Activated T-helper 1 cell treated with anti-CD3 and anti-CD28 coated beads, Interleukin-12 subunit alpha, Interleukin-12 subunit beta, Interleukin-2, Interleukin-4 antibody, amounts not matched to agents 30 ng/mL and 10 ng/mL and 1 ng/mL, durations not matched to agents 14 hours and 24 hours and 36 hours (primary cell): ENCODE measurements at regions of chr19 and their contacts with region 1.

Region 1: GRCh38 chr19:16338470-16339360 is 14.1 kb downstream of the KLF2 start:
- DNase-seq: peak; percentile 69
- H3K4me3 Mint-ChIP-seq: peak overlapping the region; percentile 76
- H3K27ac Mint-ChIP-seq: peak overlapping the region; percentile 95
- H3K4me1 Mint-ChIP-seq: peaks cover 65% of the 10 kb centered on the region
- H3K27me3 Mint-ChIP-seq: peaks cover 15% of the 10 kb centered on the region

Region 2: GRCh38 chr19:15730538-15730937 is 608.2 kb before region 1 on chr19:
- intact Hi-C with region 1: no loop called
- DNase-seq: no peak
- H3K4me3 Mint-ChIP-seq: no peak overlapping the region
- H3K27ac Mint-ChIP-seq: no peak overlapping the region
- H3K4me1 Mint-ChIP-seq: no peaks in the 10 kb centered on the region
- H3K27me3 Mint-ChIP-seq: no peaks in the 10 kb centered on the region

Region 3: DNA sequence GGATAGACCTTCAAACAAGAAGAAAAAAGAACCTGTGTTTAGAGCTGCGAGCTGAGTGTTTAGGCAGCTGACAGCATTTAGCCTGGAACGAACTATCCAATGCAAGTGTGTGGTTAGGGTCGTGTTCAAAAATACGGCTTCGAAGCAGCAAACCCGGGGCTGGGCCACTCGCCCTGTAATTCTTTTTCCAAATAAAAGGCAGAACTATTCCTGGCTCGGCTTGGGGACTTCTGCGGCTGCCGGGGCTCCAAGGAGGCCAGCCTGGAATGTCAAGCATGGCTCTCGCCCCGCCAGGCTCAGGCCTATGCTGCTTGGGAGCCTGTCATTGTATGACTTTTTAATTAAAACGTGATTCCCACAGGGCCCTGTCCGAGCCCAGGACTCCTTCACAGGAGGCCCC is 65.8 kb before region 1 on chr19:
- intact Hi-C with region 1: no loop called
- DNase-seq: no peak
- H3K4me3 Mint-ChIP-seq: no peak overlapping the region
- H3K27ac Mint-ChIP-seq: no peak overlapping the region
- H3K4me1 Mint-ChIP-seq: peaks cover 12% of the 10 kb centered on the region
- H3K27me3 Mint-ChIP-seq: peaks cover 31% of the 10 kb centered on the region

Region 4: GRCh38 chr19:16351133-16351809 is 12.6 kb after region 1 on chr19:
- intact Hi-C with region 1: loop called (anchors 1 kb)
- DNase-seq: no peak
- H3K4me3 Mint-ChIP-seq: no peak overlapping the region
- H3K27ac Mint-ChIP-seq: peak overlapping the region; percentile 23
- H3K4me1 Mint-ChIP-seq: peaks cover 43% of the 10 kb centered on the region
- H3K27me3 Mint-ChIP-seq: peaks cover 6% of the 10 kb centered on the region

Region 5: DNA sequence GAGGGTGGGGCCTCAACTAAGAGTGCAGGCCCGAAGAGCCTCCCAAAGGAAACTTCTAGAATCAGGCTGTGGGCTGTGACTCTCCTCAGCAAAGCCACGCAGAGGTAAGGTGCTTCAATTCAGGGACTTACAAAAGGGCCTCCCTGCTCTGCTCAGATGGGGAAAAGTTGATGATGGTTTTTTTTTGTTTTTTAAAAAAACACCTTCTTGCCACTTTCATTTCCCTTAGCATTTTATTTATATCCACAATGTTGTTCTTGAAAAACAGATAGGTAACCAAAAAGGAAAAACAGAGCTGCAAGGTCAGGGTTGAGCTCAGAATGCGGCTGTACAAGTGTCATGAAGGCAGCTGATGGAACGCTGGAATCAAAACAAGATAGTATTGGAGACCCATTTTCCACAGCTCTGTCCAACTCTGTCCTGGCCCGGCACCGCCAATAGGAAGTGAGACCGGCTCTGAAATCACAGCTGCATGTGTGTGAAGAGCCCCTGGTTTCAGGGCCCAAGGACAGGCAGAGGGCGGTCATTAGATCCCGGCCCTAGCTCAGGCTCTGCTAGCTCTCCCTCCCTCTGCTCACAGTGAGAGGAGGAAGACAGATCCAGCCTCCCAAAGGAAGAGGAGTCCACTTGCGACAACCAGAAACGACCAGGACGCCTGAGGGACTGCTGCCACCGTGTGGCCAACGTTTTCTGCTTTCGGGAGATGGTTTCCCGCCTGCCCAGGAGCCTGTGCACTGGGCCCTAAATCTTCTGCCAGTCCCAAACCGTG is 44.2 kb after region 1 on chr19:
- intact Hi-C with region 1: no loop called
- DNase-seq: peak; percentile 64
- H3K4me3 Mint-ChIP-seq: peak overlapping the region; percentile 62
- H3K27ac Mint-ChIP-seq: no peak overlapping the region
- H3K4me1 Mint-ChIP-seq: peaks cover 40% of the 10 kb centered on the region
- H3K27me3 Mint-ChIP-seq: no peaks in the 10 kb centered on the region

Region 6: GRCh38 chr19:16462757-16463250 is 124.1 kb after region 1 on chr19:
- intact Hi-C with region 1: no loop called
- DNase-seq: no peak
- H3K4me3 Mint-ChIP-seq: no peak overlapping the region
- H3K27ac Mint-ChIP-seq: no peak overlapping the region
- H3K4me1 Mint-ChIP-seq: peaks cover 34% of the 10 kb centered on the region
- H3K27me3 Mint-ChIP-seq: no peaks in the 10 kb centered on the region